Left ventricle myocardium inferior (tissue), 1 donor: ENCODE measurements at regions of chr1 and their contacts with region 1.

Region 1: DNA sequence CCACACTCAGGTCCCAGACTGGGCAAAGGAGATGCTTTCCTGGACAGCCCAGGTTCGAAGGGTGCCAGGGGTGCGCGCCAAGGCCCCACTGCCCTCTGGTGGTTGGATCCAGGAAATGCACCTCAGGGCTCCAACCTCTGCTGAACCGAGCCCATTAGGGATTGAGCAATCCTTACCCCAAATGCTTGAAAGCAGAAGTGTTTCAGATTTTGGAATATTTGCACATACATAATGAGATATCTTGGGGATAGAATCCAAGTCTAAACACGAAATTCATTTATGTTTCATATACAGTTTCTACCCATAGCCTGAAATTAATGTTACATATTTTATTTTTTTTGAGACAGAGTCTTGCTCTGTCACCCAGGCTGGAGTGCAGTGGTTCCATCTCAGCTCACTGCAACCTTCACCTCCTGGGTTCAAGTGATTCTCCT is 57.4 kb downstream of the SLC9A1 start:
- DNase-seq: peak; percentile 81
- H3K4me3 ChIP-seq: no peak overlapping the region
- H3K27ac ChIP-seq: peak overlapping the region; percentile 95
- H3K4me1 ChIP-seq: peaks cover 39% of the 10 kb centered on the region
- H3K27me3 ChIP-seq: no peaks in the 10 kb centered on the region
- CTCF ChIP-seq: peak; percentile 99

Region 2: GRCh38 chr1:26999440-26999987 is 98.0 kb before region 1 on chr1:
- intact Hi-C with region 1: loop called (anchors 5 kb)
- DNase-seq: peak; percentile 78
- H3K4me3 ChIP-seq: no peak overlapping the region
- H3K27ac ChIP-seq: peak overlapping the region; percentile 91
- H3K4me1 ChIP-seq: peaks cover 87% of the 10 kb centered on the region
- H3K27me3 ChIP-seq: peaks cover 26% of the 10 kb centered on the region
- CTCF ChIP-seq: no peak

Region 3: DNA sequence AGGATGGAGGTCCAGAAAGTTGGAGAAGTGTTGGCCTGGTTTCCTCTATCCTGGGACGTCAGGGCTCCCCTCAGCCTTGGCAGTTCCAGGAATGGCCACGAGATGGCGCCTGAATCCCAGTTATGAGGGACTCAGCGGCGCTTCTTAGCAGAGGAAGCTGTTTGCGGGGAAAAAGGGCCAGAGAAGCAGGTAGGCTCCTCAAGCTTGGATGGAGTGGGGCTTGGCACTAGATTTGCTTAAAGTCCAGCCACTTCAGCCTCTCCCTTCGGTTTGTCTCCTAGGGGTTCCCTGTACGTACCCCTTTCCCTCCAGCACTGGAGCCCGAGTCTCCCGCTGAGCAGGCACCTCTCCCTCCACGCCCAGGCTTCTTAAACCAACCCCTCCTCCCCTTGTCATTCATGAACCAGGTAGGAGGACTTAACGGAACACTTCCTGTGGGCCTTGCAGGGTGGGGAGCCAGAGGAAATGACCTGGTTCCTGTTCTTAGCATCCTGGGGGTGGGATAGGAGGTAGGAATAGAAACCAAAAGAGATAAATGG is 52.8 kb before region 1 on chr1:
- intact Hi-C with region 1: loop called (anchors 2 kb)
- DNase-seq: peak; percentile 87
- H3K4me3 ChIP-seq: peak overlapping the region; percentile 52
- H3K27ac ChIP-seq: peak overlapping the region; percentile 48
- H3K4me1 ChIP-seq: peaks cover 18% of the 10 kb centered on the region
- H3K27me3 ChIP-seq: no peaks in the 10 kb centered on the region
- CTCF ChIP-seq: peak; percentile 100